ENCODE measurements at regions of chr21 and their contacts with region 1.

Region 1: GRCh38 chr21:25607151-25608043 is at the start of gene MRPL39:
- DNase-seq: peak; percentile 53
- H3K4me3 ChIP-seq: peak within 1 kb of the TSS; percentile 82
- CTCF ChIP-seq: peak; percentile 91

Region 2: GRCh38 chr21:25467896-25468295 is 139.5 kb before region 1 on chr21:
- CTCF ChIA-PET with region 1: no interaction called
- POLR2A ChIA-PET with region 1: no interaction called
- DNase-seq: no peak
- H3K4me3 ChIP-seq: no peak overlapping the region
- CTCF ChIP-seq: no peak

Region 3: DNA sequence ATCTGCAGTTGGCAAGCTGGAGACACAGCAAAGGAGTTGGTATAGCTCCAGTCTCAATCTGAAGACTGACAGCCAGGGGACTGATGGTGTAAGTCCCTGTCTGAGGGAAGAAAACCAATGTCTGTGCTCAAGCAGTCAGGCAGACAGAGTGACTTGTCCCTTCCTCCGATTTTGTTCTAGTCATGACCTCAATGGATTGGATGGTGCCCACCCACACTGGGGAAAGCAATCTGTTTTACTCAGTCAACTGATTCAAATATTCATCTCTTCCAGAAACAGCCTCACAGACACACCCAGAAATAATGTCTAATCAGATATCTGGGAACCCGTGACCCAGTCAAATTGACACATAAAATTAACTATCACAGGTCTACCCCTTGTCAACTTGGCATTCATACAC is 11.8 kb after region 1 on chr21:
- CTCF ChIA-PET with region 1: interaction called, 31 read pairs
- POLR2A ChIA-PET with region 1: no interaction called
- DNase-seq: no peak
- H3K4me3 ChIP-seq: no peak overlapping the region
- CTCF ChIP-seq: no peak

Region 4: DNA sequence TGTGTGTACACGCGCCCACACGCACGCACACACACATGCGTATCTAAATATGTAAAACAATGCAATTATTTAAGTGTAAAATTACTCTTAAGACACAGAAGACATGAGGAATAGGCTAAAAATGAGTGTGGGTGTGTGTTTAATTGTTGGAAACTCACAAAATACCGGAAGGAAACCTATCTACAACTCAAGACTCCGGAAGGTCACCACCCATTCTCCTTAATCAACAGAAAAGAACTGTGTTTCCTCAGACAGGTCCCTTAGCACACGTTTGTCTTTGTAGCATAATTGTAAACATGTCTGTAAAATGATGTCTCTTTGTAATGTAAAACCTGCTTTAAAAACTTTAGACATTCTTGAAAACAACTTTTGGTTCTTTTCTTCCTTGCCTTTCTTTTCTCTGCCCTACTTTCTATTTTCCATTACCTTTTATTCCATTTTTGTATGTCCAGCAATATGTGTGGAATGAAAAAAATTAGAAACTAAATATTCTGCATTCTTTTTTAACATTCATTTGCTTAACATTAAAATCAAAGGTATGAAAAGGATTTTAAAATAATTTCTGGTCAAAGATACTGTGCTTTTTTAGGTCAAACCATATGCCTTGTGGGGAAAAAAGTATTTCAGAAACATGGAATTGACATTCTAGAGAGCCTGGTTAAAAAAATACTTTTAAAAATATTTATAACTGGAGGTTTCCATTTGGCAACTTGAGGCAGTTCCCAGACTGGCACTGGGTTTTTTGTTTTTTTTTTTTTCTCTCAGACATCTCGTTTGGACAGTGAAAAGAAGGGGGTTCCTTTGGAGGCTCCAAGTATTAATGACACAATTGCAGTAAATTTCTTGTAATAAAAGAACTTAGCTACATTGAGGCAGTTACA is 81.1 kb after region 1 on chr21:
- CTCF ChIA-PET with region 1: interaction called, 11 read pairs
- POLR2A ChIA-PET with region 1: no interaction called
- DNase-seq: no peak
- H3K4me3 ChIP-seq: no peak overlapping the region
- CTCF ChIP-seq: no peak

Region 5: DNA sequence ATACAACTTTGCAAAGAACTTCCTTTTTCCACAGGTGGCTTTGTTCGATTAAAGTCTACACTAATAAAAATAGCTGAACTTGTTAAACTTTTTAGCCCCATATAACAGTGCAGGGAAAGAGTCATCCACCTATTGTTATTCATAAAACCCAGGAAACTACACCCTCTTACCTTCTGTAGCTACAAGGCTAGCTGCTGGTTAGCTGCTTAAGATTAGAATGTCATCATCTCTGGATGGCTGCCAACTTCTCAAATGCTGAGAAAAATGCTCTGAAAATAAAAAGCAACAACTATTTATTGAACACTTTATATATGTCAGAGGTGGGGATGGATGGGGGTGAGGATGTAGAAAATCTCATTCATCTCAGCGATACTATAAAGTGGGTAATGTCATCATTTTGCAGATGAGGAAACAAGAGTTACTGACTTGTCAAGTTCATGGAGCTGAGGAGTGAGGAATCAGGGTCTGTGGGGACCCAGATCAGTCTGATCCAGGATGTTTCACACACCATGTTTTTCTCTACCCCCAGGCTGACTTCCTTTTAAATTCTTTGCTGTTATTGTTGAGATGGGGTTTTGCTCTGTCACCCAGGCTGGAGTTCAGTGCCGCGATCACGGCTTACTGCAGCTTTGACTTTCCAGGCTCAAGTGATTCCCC is 110.2 kb after region 1 on chr21:
- CTCF ChIA-PET with region 1: interaction called, 65 read pairs
- POLR2A ChIA-PET with region 1: no interaction called
- DNase-seq: no peak
- H3K4me3 ChIP-seq: no peak overlapping the region
- CTCF ChIP-seq: no peak

Region 6: GRCh38 chr21:25750085-25750484 is 142.7 kb after region 1 on chr21:
- CTCF ChIA-PET with region 1: interaction called, 11 read pairs
- POLR2A ChIA-PET with region 1: no interaction called
- DNase-seq: no peak
- H3K4me3 ChIP-seq: no peak overlapping the region
- CTCF ChIP-seq: no peak

Region 7: GRCh38 chr21:26715878-26716506 is 1108.6 kb after region 1 on chr21:
- CTCF ChIA-PET with region 1: interaction called, 15 read pairs
- POLR2A ChIA-PET with region 1: no interaction called
- DNase-seq: no peak
- H3K4me3 ChIP-seq: no peak overlapping the region
- CTCF ChIP-seq: peak; percentile 86

Measured in AG04449 (cell line).